ENCODE measurements at regions of chr5 and their contacts with region 1.

Region 1: GRCh38 chr5:151447174-151448037 is at the start of gene SLC36A1:
- DNase-seq: peak; percentile 94 to 96
- H3K4me3 ChIP-seq: peak within 1 kb of the TSS; percentile 80
- H3K4me1 ChIP-seq: peaks cover 20% of the 10 kb centered on the region
- H3K27me3 ChIP-seq: peaks cover 4% of the 10 kb centered on the region

Region 2: GRCh38 chr5:151345808-151346478 is 101.5 kb before region 1 on chr5:
- in situ Hi-C with region 1: no loop called
- DNase-seq: no peak
- H3K4me3 ChIP-seq: no peak overlapping the region
- H3K4me1 ChIP-seq: no peaks in the 10 kb centered on the region
- H3K27me3 ChIP-seq: no peaks in the 10 kb centered on the region

Region 3: GRCh38 chr5:151651997-151652645 is 204.7 kb after region 1 on chr5:
- in situ Hi-C with region 1: loop called (anchors 5 kb)
- DNase-seq: peak; percentile 64 to 86
- H3K4me3 ChIP-seq: no peak overlapping the region
- H3K4me1 ChIP-seq: no peaks in the 10 kb centered on the region
- H3K27me3 ChIP-seq: peaks cover 18% of the 10 kb centered on the region